ENCODE measurements at regions of chr2 and their contacts with region 1.

Region 1: DNA sequence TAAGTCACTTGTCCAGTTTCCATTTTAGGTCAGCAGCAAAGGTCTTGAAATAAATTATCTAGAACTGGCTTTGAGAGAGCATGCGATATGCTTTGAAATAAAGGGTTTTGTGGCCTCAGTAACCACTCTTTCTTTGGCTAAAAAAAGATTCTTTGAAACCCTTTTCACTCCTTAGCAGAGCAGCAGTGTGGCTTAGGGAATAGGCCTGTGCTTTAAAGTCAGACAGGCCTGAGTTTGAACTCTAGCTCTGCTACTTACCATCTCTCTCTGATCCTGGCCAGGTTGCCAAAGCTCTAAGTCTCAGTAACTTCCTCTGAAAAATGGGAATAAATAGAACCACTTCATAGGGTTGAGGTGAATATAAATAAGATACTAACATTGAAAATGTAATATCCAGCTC is 52.7 kb downstream of the QPCT start:
- DNase-seq: no peak
- ATAC-seq: no peak
- H3K4me3 ChIP-seq: no peak overlapping the region
- H3K4me3 Mint-ChIP-seq: no peak overlapping the region
- H3K27ac ChIP-seq: no peak overlapping the region
- H3K27ac Mint-ChIP-seq: no peak overlapping the region
- H3K4me1 ChIP-seq: no peaks in the 10 kb centered on the region
- H3K4me1 Mint-ChIP-seq: peaks cover 0 to 5% of the 10 kb centered on the region in 2 donors
- H3K27me3 ChIP-seq: no peaks in the 10 kb centered on the region
- H3K27me3 Mint-ChIP-seq: no peaks in the 10 kb centered on the region
- CTCF ChIP-seq: no peak

Region 2: DNA sequence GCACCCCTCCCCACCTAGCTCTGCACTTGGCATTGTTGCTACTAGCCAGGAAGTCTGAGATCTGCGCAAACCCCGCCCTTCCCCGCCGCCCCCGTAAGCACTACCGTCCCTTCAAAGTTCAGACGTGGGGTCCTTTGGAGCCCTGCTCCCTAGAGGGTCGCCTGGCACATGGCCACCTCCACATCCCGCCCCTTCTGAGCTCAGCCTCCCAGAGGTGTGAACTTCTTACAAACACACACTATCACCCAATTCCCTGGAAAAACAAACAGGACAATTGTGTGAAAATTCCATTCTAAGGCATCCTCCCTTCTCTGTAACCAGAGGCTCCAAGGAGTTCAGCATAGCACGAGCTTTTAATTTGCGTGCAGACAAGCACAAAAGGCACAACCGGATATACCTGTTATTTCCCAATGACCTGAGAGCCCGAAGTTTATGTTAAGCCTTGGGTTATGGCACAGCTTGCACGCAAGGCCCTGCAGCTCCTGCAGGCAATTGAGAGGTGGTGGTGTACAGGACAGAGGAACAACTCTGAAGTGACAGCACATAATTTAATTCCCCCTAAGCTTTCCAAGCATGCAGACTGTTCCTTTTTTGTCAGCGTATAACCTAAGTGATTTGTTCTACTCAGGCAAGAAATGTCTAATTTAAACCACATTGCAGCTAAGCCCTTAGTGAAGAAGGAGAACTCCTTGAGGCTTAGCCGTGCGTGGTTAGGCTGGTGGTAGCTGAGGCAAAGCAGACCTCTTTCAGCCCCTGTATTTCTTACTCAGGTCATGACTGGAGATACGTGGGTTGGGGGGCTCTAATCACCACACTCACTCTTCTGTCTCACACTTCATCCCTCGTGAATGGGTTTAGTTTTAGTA is 699.1 kb after region 1 on chr2:
- intact Hi-C with region 1: no loop called
- DNase-seq: no peak
- ATAC-seq: no peak
- H3K4me3 ChIP-seq: no peak overlapping the region
- H3K4me3 Mint-ChIP-seq: no peak overlapping the region
- H3K27ac ChIP-seq: no peak overlapping the region
- H3K27ac Mint-ChIP-seq: no peak overlapping the region
- H3K4me1 ChIP-seq: no peaks in the 10 kb centered on the region
- H3K4me1 Mint-ChIP-seq: peaks cover 0 to 8% of the 10 kb centered on the region in 2 donors
- H3K27me3 ChIP-seq: peaks cover 23% of the 10 kb centered on the region
- H3K27me3 Mint-ChIP-seq: peaks cover 36 to 46% of the 10 kb centered on the region in 2 donors
- CTCF ChIP-seq: no peak

Region 3: DNA sequence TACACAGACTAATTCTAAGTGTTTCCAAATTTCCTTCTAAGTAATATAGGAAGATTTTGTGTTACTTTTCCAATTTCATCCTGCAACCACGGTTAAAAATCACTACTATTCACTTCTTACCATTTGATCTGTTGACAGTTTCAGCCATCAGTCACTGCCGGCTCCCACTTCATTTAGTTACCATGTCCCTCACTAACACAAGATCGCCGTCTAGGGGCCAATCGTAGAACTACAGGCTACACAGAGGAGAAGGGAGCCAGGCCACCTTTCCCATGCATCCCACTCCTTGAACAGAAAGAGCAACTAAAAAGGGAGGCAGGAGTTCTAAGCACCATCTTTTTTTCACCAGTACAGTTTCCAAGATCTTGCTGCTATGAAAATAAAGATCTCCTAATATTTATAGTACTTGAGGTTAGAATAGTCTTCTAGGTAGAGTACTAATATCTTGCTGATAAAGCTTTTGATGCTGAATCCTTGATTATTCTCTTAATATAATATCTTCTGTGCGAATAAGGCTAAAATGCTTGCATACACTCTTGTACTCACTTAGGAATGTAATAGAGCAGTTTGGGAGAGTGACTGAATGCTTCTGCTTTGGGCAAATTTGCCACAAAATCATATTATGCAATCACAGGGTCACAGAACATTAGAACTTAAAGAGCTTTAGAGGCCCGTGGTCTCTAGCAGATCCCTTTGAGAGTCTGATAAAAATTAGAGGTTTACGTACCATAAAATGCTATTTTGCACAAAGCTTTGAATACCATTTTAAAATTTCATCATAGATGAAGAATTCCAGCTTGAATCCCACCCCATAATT is 718.3 kb after region 1 on chr2:
- intact Hi-C with region 1: loop called (anchors 2 kb)
- DNase-seq: peak; percentile 48 to 66
- ATAC-seq: peak; percentile 72 to 84 (median 75)
- H3K4me3 ChIP-seq: no peak overlapping the region
- H3K4me3 Mint-ChIP-seq: no peak overlapping the region
- H3K27ac ChIP-seq: no peak overlapping the region
- H3K27ac Mint-ChIP-seq: no peak overlapping the region
- H3K4me1 ChIP-seq: no peaks in the 10 kb centered on the region
- H3K4me1 Mint-ChIP-seq: peaks cover 0 to 6% of the 10 kb centered on the region in 2 donors
- H3K27me3 ChIP-seq: no peaks in the 10 kb centered on the region
- H3K27me3 Mint-ChIP-seq: peaks cover 11 to 56% of the 10 kb centered on the region in 2 donors
- CTCF ChIP-seq: peak; percentile 79

Measured in natural killer cell (primary cell).